Adrenal gland (tissue), 19 donors: ENCODE measurements at regions of chr1 and their contacts with region 1.

Region 1: DNA sequence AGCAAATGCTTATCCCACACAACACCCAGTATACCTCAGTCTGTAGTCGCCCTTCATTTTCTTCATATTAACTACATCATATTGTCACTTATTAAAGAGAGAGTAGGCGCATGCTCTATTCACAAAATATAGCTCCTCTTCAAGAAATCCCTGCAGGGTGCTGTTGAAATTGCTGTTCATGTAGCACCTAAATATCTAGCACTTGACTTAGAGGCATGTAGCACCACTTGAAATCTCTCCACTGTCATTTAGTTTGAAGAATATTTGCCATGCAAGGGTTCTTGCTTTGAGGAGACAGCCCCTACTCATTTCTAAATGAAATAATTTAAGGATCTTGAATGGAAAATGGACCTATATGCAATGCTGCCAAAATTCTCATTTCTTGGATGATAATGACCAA is 20.9 kb upstream of the LRRC8B start:
- DNase-seq: no peak
- H3K4me3 ChIP-seq: no peak overlapping the region
- H3K27ac ChIP-seq: no peak overlapping the region
- H3K4me1 ChIP-seq: no peaks in the 10 kb centered on the region
- H3K27me3 ChIP-seq: no peaks in the 10 kb centered on the region
- CTCF ChIP-seq: no peak
- POLR2A ChIP-seq: no peak

Region 2: GRCh38 chr1:89771991-89772560 is 268.4 kb after region 1 on chr1:
- intact Hi-C with region 1: loop called in 1 of 2 experiments (anchors 10 kb)
- DNase-seq: no peak
- H3K4me3 ChIP-seq: no peak overlapping the region
- H3K27ac ChIP-seq: no peak overlapping the region
- H3K4me1 ChIP-seq: no peaks in the 10 kb centered on the region
- H3K27me3 ChIP-seq: no peaks in the 10 kb centered on the region
- CTCF ChIP-seq: no peak
- POLR2A ChIP-seq: no peak